Lower leg skin (tissue), 4 donors: ENCODE measurements at regions of chr1 and their contacts with region 1.

Region 1: DNA sequence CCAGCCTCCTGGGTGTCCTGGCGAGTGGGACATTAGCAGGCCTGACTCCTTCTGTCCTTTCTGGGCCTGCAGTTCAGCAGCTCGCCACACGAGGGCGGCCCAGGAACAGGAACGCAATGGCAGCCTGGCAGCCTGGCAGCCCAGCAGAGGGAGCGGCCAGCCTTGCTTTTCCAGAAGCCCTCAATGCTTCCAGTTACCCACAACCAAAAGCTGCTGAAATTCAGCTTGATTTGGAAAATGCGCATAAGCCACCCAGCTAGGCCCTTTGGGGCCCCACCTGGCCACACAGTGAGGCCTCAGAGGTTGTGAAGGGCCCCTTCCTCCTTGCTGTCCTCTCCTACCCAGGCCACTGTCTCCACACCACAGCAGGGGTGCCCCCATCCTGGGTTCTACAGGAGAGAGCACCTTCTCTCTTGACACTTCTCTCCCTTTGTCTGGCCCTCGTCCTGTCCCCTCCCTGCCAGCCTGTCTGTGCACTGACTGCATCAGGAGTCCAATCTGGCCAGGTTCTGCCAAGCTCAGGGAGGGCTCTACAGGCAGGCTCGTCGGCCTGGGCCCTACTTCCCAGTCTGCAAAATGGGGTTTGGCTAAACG is 103.4 kb upstream of the VAMP3 start:
- DNase-seq: peak; percentile 88 to 98
- H3K4me3 ChIP-seq: no peak overlapping the region
- CTCF ChIP-seq: peak in 2 of 3 donors; percentile 89 to 99
- POLR2A ChIP-seq: no peak

Region 2: GRCh38 chr1:7752512-7753417 is 85.0 kb after region 1 on chr1:
- intact Hi-C with region 1: loop called (anchors 2 kb)
- DNase-seq: peak in 1 of 2 donors; percentile 75
- H3K4me3 ChIP-seq: no peak overlapping the region
- CTCF ChIP-seq: peak in 1 of 3 donors; percentile 43
- POLR2A ChIP-seq: no peak

Region 3: GRCh38 chr1:7902478-7903085 is 234.9 kb after region 1 on chr1:
- intact Hi-C with region 1: loop called (anchors 10 kb)
- DNase-seq: peak; percentile 34 to 85
- H3K4me3 ChIP-seq: no peak overlapping the region
- CTCF ChIP-seq: peak in 1 of 3 donors; percentile 9
- POLR2A ChIP-seq: no peak

Region 4: GRCh38 chr1:8061210-8061609 is 393.5 kb after region 1 on chr1:
- intact Hi-C with region 1: no loop called
- DNase-seq: peak in 1 of 2 donors; percentile 49
- H3K4me3 ChIP-seq: no peak overlapping the region
- CTCF ChIP-seq: no peak
- POLR2A ChIP-seq: no peak

Region 5: DNA sequence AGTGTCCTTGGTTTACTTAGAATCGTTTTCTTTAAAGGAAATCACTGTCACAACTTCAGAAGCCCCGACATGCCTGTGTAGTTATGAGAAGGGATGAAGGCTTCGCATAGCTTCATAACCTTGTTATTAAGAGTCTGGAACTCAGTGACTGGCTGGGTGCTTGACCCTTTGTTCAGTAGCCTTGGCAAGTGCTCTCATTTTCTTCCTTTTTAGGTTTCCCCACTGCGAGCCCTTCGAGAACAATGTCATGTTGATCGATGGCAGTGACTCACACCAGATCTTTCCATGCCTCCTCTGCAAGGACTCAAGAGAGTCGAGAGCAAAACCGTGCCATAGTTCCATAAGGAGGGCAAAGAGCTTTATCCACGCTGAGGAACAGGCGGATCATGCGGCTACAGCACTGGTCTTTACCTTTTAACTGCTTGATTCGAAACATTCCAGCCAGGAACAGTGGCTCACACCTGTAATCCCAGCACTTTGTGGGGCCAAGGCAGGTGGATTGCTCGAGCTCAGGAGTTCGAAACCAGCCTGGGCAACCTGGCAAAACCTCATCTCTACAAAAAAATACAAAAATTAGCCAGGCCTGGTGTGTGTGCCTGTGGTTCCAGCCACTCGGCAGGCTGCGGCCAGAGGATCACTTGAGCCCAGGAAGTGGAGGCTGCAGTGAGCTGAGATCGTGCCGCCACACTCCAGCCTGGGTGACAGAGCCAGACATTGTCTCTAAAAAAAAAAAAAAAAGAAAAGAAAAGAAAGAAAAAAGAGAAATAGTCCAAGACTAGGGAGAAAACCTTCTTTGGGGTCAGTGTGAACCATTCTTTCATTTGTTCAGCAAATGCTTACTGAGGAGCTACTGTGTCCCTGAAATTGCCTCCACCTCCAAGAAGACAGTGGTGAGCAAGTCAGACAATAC is 453.8 kb after region 1 on chr1:
- intact Hi-C with region 1: no loop called
- DNase-seq: peak in 1 of 2 donors; percentile 58
- H3K4me3 ChIP-seq: no peak overlapping the region
- CTCF ChIP-seq: no peak
- POLR2A ChIP-seq: no peak